ENCODE measurements at regions of chrX and their contacts with region 1.

Region 1: GRCh38 chrX:13506574-13506973 is 62.8 kb upstream of the EGFL6 start:
- DNase-seq: peak; percentile 2
- H3K4me3 Mint-ChIP-seq: no peak overlapping the region
- H3K27ac Mint-ChIP-seq: no peak overlapping the region
- H3K4me1 Mint-ChIP-seq: peaks cover 9% of the 10 kb centered on the region
- H3K27me3 Mint-ChIP-seq: no peaks in the 10 kb centered on the region

Region 2: GRCh38 chrX:13646154-13646549 is 139.6 kb after region 1 on chrX:
- intact Hi-C with region 1: loop called (anchors 1 kb)
- DNase-seq: no peak
- H3K4me3 Mint-ChIP-seq: no peak overlapping the region
- H3K27ac Mint-ChIP-seq: no peak overlapping the region
- H3K4me1 Mint-ChIP-seq: peaks cover 16% of the 10 kb centered on the region
- H3K27me3 Mint-ChIP-seq: no peaks in the 10 kb centered on the region

Region 3: GRCh38 chrX:13816643-13817627 is 310.4 kb after region 1 on chrX and contains the start of gene GPM6B:
- intact Hi-C with region 1: no loop called
- DNase-seq: no peak
- H3K4me3 Mint-ChIP-seq: no peak within 1 kb of the TSS
- H3K27ac Mint-ChIP-seq: no peak within 1 kb of the TSS
- H3K4me1 Mint-ChIP-seq: no peaks in the 10 kb centered on the region
- H3K27me3 Mint-ChIP-seq: peaks cover 10% of the 10 kb centered on the region
- total RNA-seq, gene GPM6B: not detected in 2 replicates